ENCODE measurements at regions of chr9 and their contacts with region 1.

Region 1: DNA sequence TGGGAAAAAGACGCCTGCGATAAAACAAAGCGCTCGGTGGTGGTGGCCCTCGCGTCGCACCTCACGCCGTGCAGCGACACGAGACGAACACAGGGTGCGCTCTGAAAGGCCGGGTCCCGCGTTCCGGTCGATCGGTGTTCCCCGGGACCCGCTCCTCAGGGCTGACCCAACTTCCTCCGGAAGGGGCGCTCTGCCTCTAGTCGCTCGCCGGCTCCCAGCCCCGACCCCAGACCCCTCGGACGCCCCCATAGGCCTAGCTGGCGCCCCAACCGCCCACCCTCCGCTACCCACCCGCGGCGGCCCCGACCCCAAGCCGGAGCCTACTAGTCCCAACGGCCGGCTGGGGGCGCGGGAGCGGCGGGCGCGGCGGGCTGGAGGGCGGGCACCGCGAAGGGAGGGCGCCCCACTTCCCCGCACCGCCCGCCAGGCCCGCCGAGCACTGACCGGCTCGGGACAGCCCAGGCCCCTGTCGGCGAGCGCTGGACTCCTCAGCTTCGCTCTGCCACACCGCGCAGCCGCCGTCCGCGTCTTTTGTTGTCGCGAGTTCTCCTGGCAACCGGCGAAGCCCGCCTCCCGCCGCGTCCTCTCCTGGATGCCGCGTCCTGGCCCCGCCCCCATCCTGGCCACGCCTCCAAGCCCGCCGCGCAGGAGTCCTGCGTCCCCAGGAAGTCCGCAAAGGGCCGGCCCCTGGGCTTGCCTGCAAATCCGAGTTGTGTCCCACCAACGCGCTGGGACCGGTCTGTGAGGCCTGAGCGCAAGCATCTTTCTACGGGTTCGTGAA is at the start of gene KIF27:
- DNase-seq: peak; percentile 94 to 99 (median 98)

Region 2: GRCh38 chr9:83980395-83981125 is 59.4 kb after region 1 on chr9 and contains the start of gene RMI1:
- intact Hi-C with region 1: loop called (anchors 10 kb)
- DNase-seq: peak; percentile 97 to 100 (median 99)

Region 3: GRCh38 chr9:84101964-84102632 is 181.0 kb after region 1 on chr9:
- intact Hi-C with region 1: no loop called
- DNase-seq: peak in 3 of 42 donors; percentile 7 to 12 (median 8)

Region 4: GRCh38 chr9:84301851-84302250 is 380.7 kb after region 1 on chr9:
- intact Hi-C with region 1: no loop called
- DNase-seq: no peak